ENCODE measurements at regions of chr12 and their contacts with region 1.

Region 1: DNA sequence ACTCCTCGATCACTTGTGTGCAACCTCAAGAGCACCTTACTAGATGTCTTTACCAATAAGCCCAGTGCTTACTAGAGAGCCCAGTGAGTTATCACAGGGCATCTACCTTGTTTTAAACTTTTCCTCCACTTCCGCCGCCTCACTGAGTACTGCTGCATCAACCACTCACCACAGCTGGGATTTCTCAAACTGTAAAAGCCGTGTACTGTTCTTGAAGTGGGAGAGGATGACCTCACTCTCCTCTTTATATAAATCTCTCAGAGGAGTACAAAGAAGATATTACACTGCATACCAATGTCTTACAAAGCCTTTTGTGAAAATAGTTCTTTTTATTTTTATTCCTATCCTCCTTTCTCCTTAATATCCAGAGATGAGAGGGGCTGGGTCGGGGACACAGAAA is 94.1 kb downstream of the PLCZ1 start:
- DNase-seq: no peak
- H3K4me3 ChIP-seq: no peak overlapping the region
- H3K27ac ChIP-seq: no peak overlapping the region
- H3K4me1 ChIP-seq: no peaks in the 10 kb centered on the region
- H3K27me3 ChIP-seq: no peaks in the 10 kb centered on the region
- CTCF ChIP-seq: no peak

Region 2: GRCh38 chr12:19415563-19415962 is 771.9 kb after region 1 on chr12:
- CTCF ChIA-PET with region 1: no interaction called
- POLR2A ChIA-PET with region 1: interaction called, 21 read pairs
- intact Hi-C with region 1: no loop called
- DNase-seq: no peak
- H3K4me3 ChIP-seq: no peak overlapping the region
- H3K27ac ChIP-seq: no peak overlapping the region
- H3K4me1 ChIP-seq: no peaks in the 10 kb centered on the region
- H3K27me3 ChIP-seq: no peaks in the 10 kb centered on the region
- CTCF ChIP-seq: no peak